ENCODE measurements at regions of chr3 and their contacts with region 1.

Region 1: GRCh38 chr3:112561731-112562688 is at the starts of genes ATG3 and SLC35A5:
- DNase-seq: peak; percentile 96 to 98
- ATAC-seq: peak; percentile 95
- H3K4me3 ChIP-seq: peak within 1 kb of the TSS; percentile 71 to 93 (median 88)
- H3K27ac ChIP-seq: peak within 1 kb of the TSS; percentile 92 to 97 (median 94)
- H3K4me1 ChIP-seq: peaks cover 25 to 36% of the 10 kb centered on the region in 2 donors
- H3K27me3 ChIP-seq: no peaks in the 10 kb centered on the region
- CTCF ChIP-seq: peak in 3 of 5 experiments; percentile 18 to 38 (median 35)
- POLR2A ChIP-seq: peak; percentile 69 to 79
- total RNA-seq, gene ATG3: 34.2 to 61.9 (median 50.7) TPM
- total RNA-seq, gene SLC35A5: 5.0 to 15.3 (median 9.5) TPM

Region 2: DNA sequence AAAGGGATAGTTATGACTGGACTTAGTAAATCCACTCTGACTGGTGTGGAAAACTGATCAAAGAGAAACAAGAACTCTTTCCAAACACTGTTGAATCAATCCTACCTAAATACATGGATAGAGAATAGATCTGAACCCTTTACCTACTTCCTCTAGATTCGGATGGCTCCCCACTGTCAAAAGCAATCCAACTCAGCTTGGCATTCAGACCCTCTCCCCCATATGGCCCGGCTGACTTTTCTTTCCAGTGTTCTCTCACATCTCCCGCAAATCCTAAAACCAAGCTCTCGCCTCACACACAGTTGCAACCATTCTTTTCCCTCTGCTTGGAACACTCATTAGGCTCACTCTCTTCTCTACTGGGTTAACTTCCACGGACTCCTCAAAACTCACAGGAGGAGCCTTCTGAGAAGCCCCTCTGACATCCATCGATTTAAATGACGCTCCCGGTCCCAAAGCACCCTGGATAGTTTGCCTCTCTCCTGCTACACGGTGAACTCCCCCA is 952.3 kb after region 1 on chr3:
- in situ Hi-C with region 1: loop called in 1 of 4 experiments (anchors 25 kb)
- intact Hi-C with region 1: no loop called
- DNase-seq: no peak
- ATAC-seq: peak; percentile 20 to 37
- H3K4me3 ChIP-seq: peak overlapping the region; percentile 83 to 94 (median 90)
- H3K27ac ChIP-seq: peak overlapping the region; percentile 81 to 89 (median 86)
- H3K4me1 ChIP-seq: peaks cover 8 to 9% of the 10 kb centered on the region in 2 donors
- H3K27me3 ChIP-seq: peaks cover 0 to 3% (median 0%) of the 10 kb centered on the region in 3 donors
- CTCF ChIP-seq: no peak
- POLR2A ChIP-seq: no peak

Measured in gastrocnemius medialis (tissue), 4 donors.